K562 (cell line): ENCODE measurements at regions of chr11 and their contacts with region 1.

Region 1: DNA sequence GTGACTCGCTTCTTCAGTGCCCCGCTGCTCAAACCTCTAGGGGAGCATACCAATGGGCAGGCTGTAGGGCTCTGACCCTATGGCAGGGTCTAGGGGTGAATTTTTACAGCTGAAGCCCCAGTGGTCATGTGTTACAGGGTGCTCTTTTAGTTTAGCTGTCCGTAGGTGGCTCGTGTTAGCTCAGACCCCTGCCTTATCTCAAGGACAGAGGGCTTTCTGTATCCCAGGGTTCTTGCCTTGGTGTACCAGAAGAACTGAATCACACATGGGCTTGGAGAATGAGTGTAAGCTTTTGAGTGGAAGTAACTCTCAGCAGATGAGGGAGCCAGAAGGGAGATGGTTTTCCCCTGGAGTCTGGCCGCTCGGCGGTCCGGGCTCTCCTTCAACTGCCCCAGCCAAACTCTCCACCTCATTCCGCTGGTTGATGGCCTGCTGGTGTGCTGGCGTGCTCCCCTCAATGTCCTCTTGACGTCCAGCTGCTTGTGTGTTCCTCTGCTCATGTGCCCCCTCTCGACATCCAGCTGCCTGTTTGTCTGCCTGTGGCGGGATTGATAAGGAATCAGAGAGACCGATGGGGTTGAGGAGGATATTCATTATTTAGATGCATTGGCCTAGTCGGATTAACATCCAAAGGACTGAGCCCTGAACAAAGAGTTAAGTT is 37.5 kb downstream of the BIRC2 start:
- DNase-seq: peak; percentile 53 to 82 (median 70)
- ATAC-seq: peak; percentile 83
- H3K4me3 ChIP-seq: no peak overlapping the region
- H3K27ac ChIP-seq: peak overlapping the region; percentile 76
- H3K4me1 ChIP-seq: peaks cover 12 to 39% of the 10 kb centered on the region in 2 experiments; a peak in 4 of 5 replicates
- H3K27me3 ChIP-seq: no peaks in the 10 kb centered on the region
- CTCF ChIP-seq: no peak
- EP300 ChIP-seq: no peak
- POLR2A ChIP-seq: no peak
- RAD21 ChIP-seq: no peak

Region 2: GRCh38 chr11:102115557-102115956 is 269.0 kb before region 1 on chr11:
- CTCF ChIA-PET with region 1: no interaction called
- POLR2A ChIA-PET with region 1: no interaction called
- in situ Hi-C with region 1: no loop called
- intact Hi-C with region 1: no loop called
- DNase-seq: no peak
- ATAC-seq: no peak
- H3K4me3 ChIP-seq: no peak overlapping the region
- H3K27ac ChIP-seq: no peak overlapping the region
- H3K4me1 ChIP-seq: peaks cover 0 to 4% of the 10 kb centered on the region in 2 experiments; a peak in 1 of 5 replicates
- H3K27me3 ChIP-seq: no peaks in the 10 kb centered on the region
- CTCF ChIP-seq: no peak
- EP300 ChIP-seq: no peak
- POLR2A ChIP-seq: no peak
- RAD21 ChIP-seq: no peak

Region 3: GRCh38 chr11:102451681-102452460 is 67.3 kb after region 1 on chr11:
- CTCF ChIA-PET with region 1: no interaction called
- POLR2A ChIA-PET with region 1: interaction called, 3 read pairs
- in situ Hi-C with region 1: no loop called
- intact Hi-C with region 1: loop called (anchors 5 kb)
- DNase-seq: peak; percentile 66 to 81 (median 70)
- ATAC-seq: peak; percentile 84
- H3K4me3 ChIP-seq: peak overlapping the region; percentile 88
- H3K27ac ChIP-seq: peak overlapping the region; percentile 86
- H3K4me1 ChIP-seq: peaks cover 10 to 32% of the 10 kb centered on the region in 2 experiments; a peak in 4 of 5 replicates
- H3K27me3 ChIP-seq: no peaks in the 10 kb centered on the region
- CTCF ChIP-seq: peak; percentile 3 to 42 (median 20); a peak in 4 of 6 replicates
- EP300 ChIP-seq: no peak
- POLR2A ChIP-seq: no peak; the same call in 1 of the 2 replicates
- RAD21 ChIP-seq: peak in 1 of 2 experiments; percentile 22; a peak in 2 of 4 replicates